Left ventricle myocardium inferior (tissue), 1 donor: ENCODE measurements at regions of chr5 and their contacts with region 1.

Region 1: GRCh38 chr5:116574367-116575325 is at the start of gene SEMA6A:
- DNase-seq: peak; percentile 92
- H3K4me3 ChIP-seq: peak within 1 kb of the TSS; percentile 79
- H3K27ac ChIP-seq: peak within 1 kb of the TSS; percentile 83
- H3K4me1 ChIP-seq: peaks cover 52% of the 10 kb centered on the region
- H3K27me3 ChIP-seq: peaks cover 42% of the 10 kb centered on the region
- CTCF ChIP-seq: no peak
- total RNA-seq, gene SEMA6A: 6.3 TPM

Region 2: DNA sequence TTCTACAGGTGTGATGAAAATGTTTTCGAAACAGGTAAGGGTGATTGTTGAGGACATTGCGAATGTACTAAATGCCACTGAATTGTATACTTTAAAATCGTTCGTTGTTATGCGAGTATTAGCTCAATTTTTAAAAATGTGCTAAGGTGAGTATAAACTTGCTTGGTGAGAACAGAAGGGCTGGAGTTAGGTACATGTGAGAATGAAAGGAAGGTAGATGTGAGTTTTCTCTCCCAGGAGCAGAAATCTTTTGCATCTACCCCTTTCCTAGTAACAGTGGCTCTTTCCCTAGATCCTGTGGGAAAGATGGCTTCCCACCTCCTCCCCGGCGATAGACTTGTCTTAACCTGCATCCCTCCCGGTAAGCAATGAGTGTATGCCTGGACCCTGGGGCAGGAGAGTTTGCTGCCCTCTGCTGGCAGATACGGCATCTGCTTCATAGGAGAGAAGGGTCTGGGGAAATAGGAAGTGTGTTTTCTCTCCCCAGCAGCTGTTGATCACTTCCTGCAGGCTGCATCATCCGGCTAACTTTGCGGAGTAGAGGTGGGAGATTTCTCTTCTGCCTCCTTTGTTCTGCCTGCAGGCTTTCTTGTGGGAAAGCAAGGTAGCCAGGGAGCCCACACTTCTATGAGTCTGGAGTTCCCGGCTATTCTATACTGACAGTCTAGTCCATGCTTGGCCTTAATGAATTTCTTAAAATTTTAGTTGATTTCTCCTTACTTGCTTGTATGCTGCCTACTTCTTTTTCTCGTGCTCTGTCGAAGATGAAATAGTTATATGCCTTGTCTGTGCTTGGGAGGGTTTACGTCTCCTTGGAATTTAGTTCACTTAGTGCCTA is 373.3 kb after region 1 on chr5:
- intact Hi-C with region 1: loop called (anchors 5 kb)
- DNase-seq: peak; percentile 45
- H3K4me3 ChIP-seq: no peak overlapping the region
- H3K27ac ChIP-seq: no peak overlapping the region
- H3K4me1 ChIP-seq: no peaks in the 10 kb centered on the region
- H3K27me3 ChIP-seq: no peaks in the 10 kb centered on the region
- CTCF ChIP-seq: peak; percentile 83